ENCODE measurements at regions of chr4 and their contacts with region 1.

Region 1: GRCh38 chr4:118898684-118899138 is 10.1 kb downstream of the SYNPO2 start:
- DNase-seq: no peak
- H3K4me3 ChIP-seq: no peak overlapping the region
- H3K27ac ChIP-seq: peak overlapping the region; percentile 74 to 87 (median 81)
- H3K4me1 ChIP-seq: peaks cover 0 to 13% (median 5%) of the 10 kb centered on the region in 4 donors
- H3K27me3 ChIP-seq: no peaks in the 10 kb centered on the region
- CTCF ChIP-seq: no peak
- EP300 ChIP-seq: no peak
- POLR2A ChIP-seq: no peak

Region 2: DNA sequence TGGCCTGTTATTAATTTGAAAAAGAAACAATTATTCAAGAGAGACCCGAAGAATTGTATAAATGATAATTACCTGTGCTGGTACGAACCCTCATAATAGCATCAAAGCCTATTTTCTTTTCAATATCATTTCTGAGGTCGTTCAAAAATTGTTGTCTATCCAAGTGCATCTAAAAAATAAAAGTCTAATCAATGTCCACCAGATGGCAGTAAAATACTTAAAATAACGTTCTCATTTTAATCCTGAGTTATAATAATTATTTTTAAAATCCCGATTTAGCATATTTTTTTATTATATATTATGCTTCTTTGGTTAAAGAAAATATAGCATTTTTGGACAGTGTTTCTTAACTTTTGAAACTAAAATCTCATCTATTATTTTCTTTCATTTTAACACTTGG is 157.8 kb before region 1 on chr4:
- in situ Hi-C with region 1: no loop called
- intact Hi-C with region 1: loop called (anchors 10 kb)
- DNase-seq: no peak
- H3K4me3 ChIP-seq: peak overlapping the region in 1 of 4 donors; percentile 7
- H3K27ac ChIP-seq: peak overlapping the region; percentile 59 to 75 (median 70)
- H3K4me1 ChIP-seq: peaks cover 0 to 9% (median 0%) of the 10 kb centered on the region in 4 donors
- H3K27me3 ChIP-seq: no peaks in the 10 kb centered on the region
- CTCF ChIP-seq: peak; percentile 40 to 53 (median 46)
- EP300 ChIP-seq: no peak
- POLR2A ChIP-seq: no peak

Region 3: DNA sequence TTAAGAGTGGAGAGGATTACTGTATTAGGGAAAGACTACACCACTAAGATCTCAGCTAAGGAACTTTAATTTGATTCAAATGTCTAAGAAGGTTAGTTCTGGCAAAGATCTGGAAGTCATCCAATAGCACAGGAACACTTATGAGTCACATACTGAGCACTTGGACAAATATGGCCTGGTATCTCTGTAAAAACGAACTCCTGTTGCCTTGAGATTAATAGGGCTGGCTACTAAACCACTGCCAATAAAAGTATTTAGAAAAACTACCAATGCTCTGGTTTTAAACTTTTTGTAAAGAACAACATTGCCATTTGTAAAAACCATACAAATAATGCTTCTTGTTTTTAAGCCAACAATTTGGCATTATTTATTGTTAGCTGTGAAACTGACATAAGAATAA is 133.3 kb before region 1 on chr4:
- in situ Hi-C with region 1: loop called in 3 of 4 experiments (anchors 10 to 25 kb)
- intact Hi-C with region 1: no loop called
- DNase-seq: no peak
- H3K4me3 ChIP-seq: no peak overlapping the region
- H3K27ac ChIP-seq: peak overlapping the region; percentile 64 to 81 (median 76)
- H3K4me1 ChIP-seq: peaks cover 6 to 64% (median 10%) of the 10 kb centered on the region in 4 donors
- H3K27me3 ChIP-seq: no peaks in the 10 kb centered on the region
- CTCF ChIP-seq: no peak
- EP300 ChIP-seq: peak; percentile 35
- POLR2A ChIP-seq: no peak

Region 4: DNA sequence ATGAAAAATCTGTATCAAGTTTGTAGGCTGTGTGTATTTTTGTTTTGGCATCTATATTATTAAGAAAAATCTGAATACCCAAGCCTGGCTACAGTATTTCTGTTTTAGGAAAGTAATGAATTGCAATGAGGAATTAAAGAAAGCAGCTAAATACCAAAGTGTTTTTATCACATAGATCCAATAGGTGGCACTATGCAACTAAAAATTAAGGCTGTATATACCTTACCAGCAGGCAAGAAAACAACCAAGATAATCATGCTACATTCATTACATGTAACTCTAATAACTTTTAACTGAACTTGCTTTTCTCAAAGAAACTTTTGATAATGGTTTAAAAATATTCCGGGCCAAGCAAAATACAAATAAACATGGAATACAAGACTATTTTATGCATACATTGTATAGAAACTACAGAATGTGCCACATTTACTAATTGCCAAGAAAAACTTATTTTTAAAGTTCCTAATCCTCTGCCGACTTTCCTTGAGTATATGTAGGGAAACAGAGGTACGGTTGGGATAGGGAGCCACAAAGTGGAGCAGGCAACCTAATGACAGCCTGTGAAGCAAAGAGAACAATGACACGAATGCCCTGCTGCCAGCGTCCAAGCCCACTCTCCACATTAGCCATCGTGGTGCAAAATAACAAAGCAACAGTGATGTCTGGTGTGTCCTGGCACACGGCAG is 126.5 kb before region 1 on chr4:
- in situ Hi-C with region 1: loop called in 3 of 4 experiments (anchors 10 to 25 kb)
- intact Hi-C with region 1: no loop called
- DNase-seq: no peak
- H3K4me3 ChIP-seq: no peak overlapping the region
- H3K27ac ChIP-seq: peak overlapping the region; percentile 66 to 81 (median 78)
- H3K4me1 ChIP-seq: peaks cover 0 to 46% (median 9%) of the 10 kb centered on the region in 4 donors
- H3K27me3 ChIP-seq: no peaks in the 10 kb centered on the region
- CTCF ChIP-seq: peak; percentile 49 to 72 (median 57)
- EP300 ChIP-seq: no peak
- POLR2A ChIP-seq: no peak

Region 5: DNA sequence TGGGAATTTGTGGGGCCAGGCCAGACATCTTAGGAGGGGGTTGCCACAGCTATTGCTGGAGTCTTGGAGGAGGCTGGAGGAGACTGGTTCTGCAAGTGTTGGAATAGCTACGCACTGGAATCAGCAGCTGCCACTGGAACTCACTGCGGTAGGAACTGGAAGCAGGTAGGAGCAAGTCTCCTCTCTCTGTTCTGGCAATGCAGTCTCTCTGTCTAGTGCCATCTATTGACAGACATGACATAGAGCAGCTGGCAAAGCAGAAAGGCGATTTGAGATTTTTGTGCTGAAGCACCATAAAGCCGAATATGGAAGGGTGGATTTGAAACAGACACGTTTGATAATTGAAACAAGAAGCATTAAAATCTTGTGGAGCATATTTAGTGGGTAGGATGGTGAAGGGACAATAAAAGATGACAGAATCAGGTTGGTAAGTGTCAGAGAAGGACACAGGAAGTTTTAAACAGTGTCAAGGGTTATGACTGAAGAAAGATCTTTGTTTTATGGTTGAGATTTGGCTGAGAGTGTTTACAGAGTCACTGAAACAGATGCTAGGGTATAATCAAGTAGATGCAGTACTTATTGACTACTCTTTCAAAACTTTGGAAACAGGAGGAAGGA is 33.5 kb before region 1 on chr4:
- in situ Hi-C with region 1: no loop called
- intact Hi-C with region 1: no loop called
- DNase-seq: peak; percentile 20
- H3K4me3 ChIP-seq: no peak overlapping the region
- H3K27ac ChIP-seq: no peak overlapping the region
- H3K4me1 ChIP-seq: peaks cover 0 to 3% (median 0%) of the 10 kb centered on the region in 4 donors
- H3K27me3 ChIP-seq: no peaks in the 10 kb centered on the region
- CTCF ChIP-seq: peak; percentile 49 to 60 (median 53)
- EP300 ChIP-seq: no peak
- POLR2A ChIP-seq: no peak

Region 6: GRCh38 chr4:118968005-118968404 is 69.3 kb after region 1 on chr4:
- in situ Hi-C with region 1: no loop called
- intact Hi-C with region 1: loop called (anchors 10 kb)
- DNase-seq: peak; percentile 43
- H3K4me3 ChIP-seq: no peak overlapping the region
- H3K27ac ChIP-seq: peak overlapping the region; percentile 82 to 88 (median 86)
- H3K4me1 ChIP-seq: peaks cover 17 to 63% (median 24%) of the 10 kb centered on the region in 4 donors
- H3K27me3 ChIP-seq: no peaks in the 10 kb centered on the region
- CTCF ChIP-seq: no peak
- EP300 ChIP-seq: no peak
- POLR2A ChIP-seq: no peak

Region 7: GRCh38 chr4:119041951-119042560 is 143.3 kb after region 1 on chr4:
- in situ Hi-C with region 1: no loop called
- intact Hi-C with region 1: no loop called
- DNase-seq: peak; percentile 76
- H3K4me3 ChIP-seq: no peak overlapping the region
- H3K27ac ChIP-seq: peak overlapping the region; percentile 85 to 91 (median 88)
- H3K4me1 ChIP-seq: peaks cover 4 to 56% (median 18%) of the 10 kb centered on the region in 4 donors
- H3K27me3 ChIP-seq: no peaks in the 10 kb centered on the region
- CTCF ChIP-seq: peak; percentile 59 to 81 (median 69)
- EP300 ChIP-seq: no peak
- POLR2A ChIP-seq: no peak

Region 8: GRCh38 chr4:119765936-119766335 is 867.2 kb after region 1 on chr4:
- in situ Hi-C with region 1: no loop called
- intact Hi-C with region 1: no loop called
- DNase-seq: no peak
- H3K4me3 ChIP-seq: no peak overlapping the region
- H3K27ac ChIP-seq: no peak overlapping the region
- H3K4me1 ChIP-seq: no peaks in the 10 kb centered on the region
- H3K27me3 ChIP-seq: no peaks in the 10 kb centered on the region
- CTCF ChIP-seq: no peak
- EP300 ChIP-seq: no peak
- POLR2A ChIP-seq: no peak

Measured in transverse colon (tissue), 4 donors.